ENCODE measurements at regions of chr20 and their contacts with region 1.

Region 1: DNA sequence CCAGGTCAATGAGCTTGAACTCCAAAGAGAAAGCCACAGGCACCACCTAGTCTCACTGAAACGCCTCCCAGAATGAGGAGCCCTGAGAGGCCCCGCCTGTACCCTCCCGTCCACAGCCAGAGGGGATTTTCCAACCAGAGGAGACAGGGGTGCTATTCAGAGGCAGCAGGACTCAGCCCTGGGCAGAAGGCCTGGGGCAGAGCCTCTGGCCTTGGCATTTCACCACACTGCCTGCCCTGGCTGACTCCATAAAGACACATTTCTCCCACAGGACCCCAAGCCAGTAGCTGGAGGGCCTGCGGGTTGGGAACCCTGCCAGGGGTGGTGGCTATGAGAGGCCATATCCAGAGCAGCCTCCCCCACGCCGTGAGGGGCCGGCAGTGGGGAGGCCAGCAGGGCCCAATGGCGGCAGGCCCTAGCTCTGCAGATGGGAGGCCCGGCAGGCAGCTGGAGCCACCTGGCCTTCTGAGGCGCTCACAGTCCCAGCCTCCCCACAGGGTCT is 159.3 kb downstream of the PREX1 start:
- DNase-seq: no peak
- H3K4me3 ChIP-seq: no peak overlapping the region
- H3K27ac ChIP-seq: no peak overlapping the region
- H3K4me1 ChIP-seq: no peaks in the 10 kb centered on the region
- H3K27me3 ChIP-seq: no peaks in the 10 kb centered on the region
- CTCF ChIP-seq: no peak

Region 2: DNA sequence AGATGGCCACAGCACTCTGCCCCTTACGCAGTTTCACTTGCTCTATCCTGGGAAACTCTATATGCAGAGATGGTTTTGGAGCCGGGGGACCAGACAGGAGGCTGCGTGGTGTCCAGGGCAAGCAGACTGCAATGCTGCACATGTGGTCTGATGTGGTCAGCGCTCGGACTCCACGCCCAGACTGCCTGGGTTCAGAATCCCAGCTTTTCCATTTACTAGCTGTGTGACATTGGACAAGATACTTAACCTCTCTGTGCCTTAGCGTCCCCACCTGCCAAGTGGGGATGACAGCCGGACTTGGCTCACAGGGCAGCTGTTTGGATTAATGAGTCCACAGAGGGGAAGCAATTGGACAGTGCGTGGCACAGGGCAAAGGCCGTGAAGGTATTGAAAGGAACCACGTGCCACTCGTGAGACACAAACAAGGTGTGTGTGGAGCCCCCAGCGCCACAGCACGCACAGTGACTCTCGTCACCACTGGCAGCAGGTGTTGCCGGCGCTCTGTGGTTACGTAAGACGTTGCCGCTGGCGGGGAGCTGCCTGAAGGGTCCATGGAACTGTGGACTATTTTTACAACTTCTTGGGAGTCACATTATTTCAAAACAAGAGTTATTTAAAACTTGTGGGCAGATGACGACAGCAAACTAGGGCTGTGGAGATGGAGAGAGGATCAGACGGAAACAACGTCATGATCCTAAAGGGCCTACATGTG is 42.1 kb before region 1 on chr20:
- CTCF ChIA-PET with region 1: no interaction called
- dilution Hi-C with region 1: no loop called
- in situ Hi-C with region 1: no loop called
- intact Hi-C with region 1: no loop called
- DNase-seq: no peak
- H3K4me3 ChIP-seq: no peak overlapping the region
- H3K27ac ChIP-seq: no peak overlapping the region
- H3K4me1 ChIP-seq: peaks cover 5% of the 10 kb centered on the region
- H3K27me3 ChIP-seq: no peaks in the 10 kb centered on the region
- CTCF ChIP-seq: no peak

Region 3: GRCh38 chr20:48750947-48751635 is 82.6 kb after region 1 on chr20:
- CTCF ChIA-PET with region 1: no interaction called
- dilution Hi-C with region 1: no loop called
- in situ Hi-C with region 1: no loop called
- intact Hi-C with region 1: no loop called
- DNase-seq: no peak
- H3K4me3 ChIP-seq: no peak overlapping the region
- H3K27ac ChIP-seq: no peak overlapping the region
- H3K4me1 ChIP-seq: no peaks in the 10 kb centered on the region
- H3K27me3 ChIP-seq: no peaks in the 10 kb centered on the region
- CTCF ChIP-seq: no peak

Region 4: DNA sequence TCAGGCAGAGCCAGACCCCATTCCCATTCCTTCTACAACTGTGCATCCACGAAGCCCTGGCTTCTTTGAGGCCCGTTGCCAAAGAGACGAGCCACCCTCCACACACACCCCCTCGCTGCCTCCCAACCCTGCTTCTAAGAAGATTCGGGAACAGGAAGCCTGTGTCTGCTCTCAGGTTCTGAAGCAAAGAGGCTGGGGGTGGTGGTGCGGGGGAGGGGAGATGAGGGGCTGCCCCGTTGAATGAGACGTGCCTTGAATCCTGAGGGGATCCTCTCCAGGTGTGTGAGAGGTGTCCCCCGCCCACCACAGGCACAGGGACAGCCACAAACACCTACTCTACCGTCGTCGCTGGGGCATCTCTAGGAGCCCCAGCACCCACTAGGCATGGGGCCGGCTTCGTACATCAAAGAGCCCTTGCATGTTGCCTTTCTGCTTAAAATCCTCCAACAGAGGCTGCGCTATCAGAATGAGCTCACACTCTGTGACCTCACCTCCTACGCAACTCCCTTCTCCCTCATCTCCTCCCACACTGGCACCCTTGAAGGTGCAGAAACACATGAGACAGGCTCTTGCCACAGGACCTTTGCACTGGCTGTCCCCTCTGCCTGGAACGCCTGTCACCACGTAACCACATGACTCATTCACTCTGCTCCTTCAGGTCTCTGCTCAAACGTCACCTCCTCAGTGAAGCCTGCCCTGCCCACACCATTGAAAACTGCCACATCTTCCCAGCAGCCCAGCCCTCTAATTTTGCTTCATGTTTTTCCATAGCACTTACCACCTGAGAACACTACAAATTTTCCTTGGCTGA is 100.8 kb after region 1 on chr20:
- CTCF ChIA-PET with region 1: no interaction called
- dilution Hi-C with region 1: loop called (anchors 5 kb)
- in situ Hi-C with region 1: no loop called
- intact Hi-C with region 1: no loop called
- DNase-seq: no peak
- H3K4me3 ChIP-seq: no peak overlapping the region
- H3K27ac ChIP-seq: no peak overlapping the region
- H3K4me1 ChIP-seq: no peaks in the 10 kb centered on the region
- H3K27me3 ChIP-seq: peaks cover 2% of the 10 kb centered on the region
- CTCF ChIP-seq: no peak